Panc1 (cell line): ENCODE measurements at regions of chr1 and their contacts with region 1.

Region 1: DNA sequence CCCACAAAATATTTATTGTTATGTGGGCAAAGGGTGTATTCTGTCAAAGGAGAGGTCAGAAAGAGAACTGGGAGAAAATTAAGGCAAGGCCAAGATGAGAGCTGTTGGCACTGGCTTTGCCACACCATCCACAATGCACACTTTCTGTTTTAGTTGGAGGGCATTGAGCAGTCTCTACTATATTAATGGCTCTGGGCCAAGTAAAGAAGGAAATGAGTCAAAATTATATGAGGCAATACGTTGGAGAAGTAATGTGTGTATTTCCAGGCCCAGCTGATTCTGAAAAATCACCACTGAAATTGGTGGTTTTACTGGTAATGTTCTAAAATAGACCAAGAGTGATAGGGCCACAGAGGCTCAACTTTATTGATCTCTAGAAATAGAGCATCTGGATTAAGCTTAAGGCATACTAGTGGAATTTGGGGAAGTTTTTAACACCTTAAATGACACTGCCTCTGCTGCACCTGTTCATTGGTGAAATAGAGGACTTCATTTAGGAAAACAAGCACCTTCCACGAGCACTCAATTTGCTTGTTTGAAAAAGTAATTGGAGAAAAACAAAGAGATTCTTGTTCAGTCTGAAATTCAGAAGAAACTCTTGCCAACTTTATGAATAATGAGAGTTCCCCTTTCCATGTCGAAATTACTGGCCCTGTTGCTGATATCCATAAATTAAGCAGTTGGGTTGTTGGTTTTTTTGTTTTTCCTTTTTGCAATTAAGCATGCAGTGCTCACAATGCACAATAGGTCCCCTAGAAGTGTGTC is 424.9 kb downstream of the ADGRL2 start:
- DNase-seq: no peak
- ATAC-seq: no peak
- H3K4me3 ChIP-seq: no peak overlapping the region
- H3K27ac ChIP-seq: no peak overlapping the region
- H3K4me1 ChIP-seq: no peaks in the 10 kb centered on the region
- H3K27me3 ChIP-seq: no peaks in the 10 kb centered on the region
- CTCF ChIP-seq: no peak

Region 2: GRCh38 chr1:82343381-82343780 is 117.8 kb after region 1 on chr1:
- CTCF ChIA-PET with region 1: interaction called, 12 read pairs
- POLR2A ChIA-PET with region 1: no interaction called
- in situ Hi-C with region 1: no loop called
- intact Hi-C with region 1: no loop called
- DNase-seq: no peak
- ATAC-seq: no peak
- H3K4me3 ChIP-seq: no peak overlapping the region
- H3K27ac ChIP-seq: no peak overlapping the region
- H3K4me1 ChIP-seq: no peaks in the 10 kb centered on the region
- H3K27me3 ChIP-seq: no peaks in the 10 kb centered on the region
- CTCF ChIP-seq: no peak